ENCODE measurements at regions of chr9 and their contacts with region 1.

Region 1: DNA sequence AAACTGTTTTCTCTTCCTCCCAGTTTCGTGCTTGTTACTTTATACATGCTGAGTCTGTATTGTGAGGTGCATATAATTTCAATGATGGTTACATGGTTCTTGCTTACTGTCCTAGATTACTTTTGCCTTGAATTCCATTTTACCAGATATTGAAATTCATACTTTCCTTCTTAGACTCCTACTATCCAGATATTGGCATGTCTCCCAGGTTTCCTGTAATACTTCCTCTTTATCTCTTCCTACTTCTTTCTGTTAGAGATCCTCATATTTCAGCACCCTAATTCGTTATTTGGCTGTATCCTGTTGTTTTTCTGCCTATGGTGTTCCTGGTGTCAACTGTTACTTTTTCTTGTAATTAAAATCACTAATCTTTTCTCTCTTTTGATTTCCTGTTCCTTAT is 522.1 kb downstream of the CCDC171 start:
- DNase-seq: no peak
- H3K4me3 ChIP-seq: no peak overlapping the region
- H3K27ac ChIP-seq: no peak overlapping the region
- H3K4me1 ChIP-seq: no peaks in the 10 kb centered on the region
- H3K27me3 ChIP-seq: no peaks in the 10 kb centered on the region
- CTCF ChIP-seq: no peak
- POLR2A ChIP-seq: no peak

Region 2: GRCh38 chr9:16058131-16058549 is 16.8 kb before region 1 on chr9:
- intact Hi-C with region 1: no loop called
- DNase-seq: no peak
- H3K4me3 ChIP-seq: no peak overlapping the region
- H3K27ac ChIP-seq: no peak overlapping the region
- H3K4me1 ChIP-seq: no peaks in the 10 kb centered on the region
- H3K27me3 ChIP-seq: no peaks in the 10 kb centered on the region
- CTCF ChIP-seq: no peak
- POLR2A ChIP-seq: no peak

Region 3: DNA sequence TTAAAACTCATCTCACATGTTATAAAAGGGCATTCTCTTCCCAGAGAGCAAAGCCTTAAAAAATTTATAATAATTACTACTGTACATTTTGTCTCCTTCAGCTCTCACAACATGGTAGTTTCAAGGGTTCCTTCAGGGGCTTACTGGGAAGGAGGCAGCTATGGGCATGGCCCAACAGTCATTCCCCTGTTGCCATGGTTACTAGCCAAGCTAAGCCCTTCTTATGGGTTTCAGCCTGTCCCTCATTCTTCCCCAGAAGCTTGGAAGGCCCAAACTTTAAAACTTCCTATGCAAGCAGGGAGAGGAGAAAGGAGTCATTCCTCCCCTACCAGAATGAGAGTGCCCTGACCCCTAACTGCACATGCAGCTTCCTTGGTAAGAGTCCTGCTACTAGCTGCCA is 977.7 kb after region 1 on chr9:
- intact Hi-C with region 1: no loop called
- DNase-seq: no peak
- H3K4me3 ChIP-seq: no peak overlapping the region
- H3K27ac ChIP-seq: no peak overlapping the region
- H3K4me1 ChIP-seq: no peaks in the 10 kb centered on the region
- H3K27me3 ChIP-seq: no peaks in the 10 kb centered on the region
- CTCF ChIP-seq: no peak
- POLR2A ChIP-seq: no peak

Region 4: GRCh38 chr9:17556255-17556654 is 1481.3 kb after region 1 on chr9:
- intact Hi-C with region 1: loop called (anchors 5 kb)
- DNase-seq: no peak
- H3K4me3 ChIP-seq: no peak overlapping the region
- H3K27ac ChIP-seq: no peak overlapping the region
- H3K4me1 ChIP-seq: no peaks in the 10 kb centered on the region
- H3K27me3 ChIP-seq: no peaks in the 10 kb centered on the region
- CTCF ChIP-seq: no peak
- POLR2A ChIP-seq: no peak

Measured in breast epithelium (tissue), 4 donors.